Thyroid gland (tissue), 4 donors: ENCODE measurements at regions of chr17 and their contacts with region 1.

Region 1: DNA sequence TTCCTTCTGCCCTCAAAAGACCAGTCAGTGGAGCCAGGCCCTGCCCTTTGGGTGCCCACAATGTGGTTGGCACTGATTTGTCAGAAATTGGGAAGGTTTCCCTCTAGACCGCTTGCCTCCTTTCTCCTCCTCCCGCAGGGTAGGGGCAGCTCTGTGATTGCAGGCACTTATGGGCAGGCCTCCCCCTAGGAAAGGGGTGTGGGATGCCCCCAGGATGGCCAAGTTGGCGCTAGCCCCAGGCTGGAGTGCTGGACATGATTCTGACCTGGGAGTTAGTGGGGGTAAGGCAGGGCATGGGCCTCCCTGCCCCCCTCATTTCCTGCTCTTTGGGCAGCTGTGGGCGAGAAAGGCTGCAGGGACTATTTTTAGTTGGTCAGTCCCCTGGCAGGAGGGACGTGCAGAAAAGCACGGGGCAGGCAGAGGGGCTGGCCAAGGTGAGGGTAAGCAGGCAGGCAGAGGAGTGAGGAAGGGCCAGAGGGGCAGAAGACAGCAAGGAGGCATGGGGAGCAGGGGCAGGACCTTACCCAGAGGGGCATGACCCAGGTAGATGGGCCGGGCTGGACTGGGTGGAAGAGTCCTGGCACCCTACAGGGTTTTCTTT is 3.3 kb downstream of the RARA start:
- DNase-seq: peak; percentile 67 to 80
- H3K4me3 ChIP-seq: no peak overlapping the region
- H3K27ac ChIP-seq: peak overlapping the region; percentile 82 to 96 (median 88)
- H3K4me1 ChIP-seq: peaks cover 76 to 100% of the 10 kb centered on the region in 2 donors
- H3K27me3 ChIP-seq: no peaks in the 10 kb centered on the region
- CTCF ChIP-seq: no peak
- POLR2A ChIP-seq: peak in 1 of 2 donors; percentile 4

Region 2: GRCh38 chr17:40345161-40345993 is 33.1 kb after region 1 on chr17:
- intact Hi-C with region 1: loop called (anchors 2 kb)
- DNase-seq: peak; percentile 84 to 86
- H3K4me3 ChIP-seq: peak overlapping the region; percentile 8 to 97 (median 38)
- H3K27ac ChIP-seq: peak overlapping the region; percentile 85 to 95 (median 88)
- H3K4me1 ChIP-seq: peaks cover 63 to 80% of the 10 kb centered on the region in 2 donors
- H3K27me3 ChIP-seq: no peaks in the 10 kb centered on the region
- CTCF ChIP-seq: no peak
- POLR2A ChIP-seq: peak in 1 of 2 donors; percentile 56

Region 3: GRCh38 chr17:40378966-40379365 is 66.7 kb after region 1 on chr17:
- intact Hi-C with region 1: no loop called
- DNase-seq: no peak
- H3K4me3 ChIP-seq: no peak overlapping the region
- H3K27ac ChIP-seq: no peak overlapping the region
- H3K4me1 ChIP-seq: no peaks in the 10 kb centered on the region
- H3K27me3 ChIP-seq: no peaks in the 10 kb centered on the region
- CTCF ChIP-seq: no peak
- POLR2A ChIP-seq: no peak